GM10248 (cell line): ENCODE measurements at regions of chr19 and their contacts with region 1.

Region 1: GRCh38 chr19:58346961-58347931 is 6.0 kb downstream of the A1BG start:
- DNase-seq: peak; percentile 96
- CTCF ChIP-seq: no peak

Region 2: DNA sequence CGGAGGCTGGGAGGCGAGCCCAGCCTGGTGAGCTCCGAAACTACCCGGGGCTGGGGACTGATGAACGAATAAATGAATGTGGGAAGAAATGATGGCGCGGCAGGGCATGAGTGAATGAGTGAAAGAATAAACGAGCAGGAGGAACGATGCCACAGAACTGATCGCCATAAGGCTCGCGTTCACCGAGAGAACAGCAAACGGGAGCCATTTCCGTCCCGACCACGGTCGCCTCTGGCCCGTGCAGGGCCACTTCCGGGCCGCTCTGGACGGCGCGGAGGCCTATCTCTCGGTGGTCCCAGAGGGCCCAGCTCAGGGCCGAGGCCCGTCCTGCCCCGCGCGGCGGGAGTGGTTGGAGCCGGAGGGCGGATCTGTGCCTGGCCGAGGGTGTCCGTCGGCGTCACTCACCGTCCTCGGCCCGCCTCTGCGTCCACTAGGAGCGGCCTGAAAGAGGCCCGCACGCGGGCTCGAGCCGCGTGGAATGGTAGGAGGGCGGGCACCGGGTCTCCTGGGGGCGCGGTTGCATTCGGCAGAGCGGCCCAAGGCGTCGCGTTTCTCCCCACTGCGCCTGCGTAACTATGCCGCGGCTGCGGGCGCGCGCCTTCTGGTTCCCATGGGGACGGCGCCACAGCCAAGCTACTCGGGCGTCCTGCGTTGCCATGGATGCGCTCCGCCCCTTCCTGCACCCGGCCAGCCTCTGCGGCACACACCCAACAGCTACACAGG is 15.2 kb after region 1 on chr19 and contains the start of gene ZNF497:
- CTCF ChIA-PET with region 1: interaction called, 14 read pairs
- POLR2A ChIA-PET with region 1: interaction called, 9 read pairs
- DNase-seq: peak; percentile 100
- CTCF ChIP-seq: no peak

Region 3: GRCh38 chr19:58386576-58387337 is 39.5 kb after region 1 on chr19 and contains the start of gene RPS5:
- CTCF ChIA-PET with region 1: no interaction called
- POLR2A ChIA-PET with region 1: no interaction called
- DNase-seq: peak; percentile 100
- CTCF ChIP-seq: no peak

Region 4: GRCh38 chr19:58538257-58539168 is 191.3 kb after region 1 on chr19:
- CTCF ChIA-PET with region 1: no interaction called
- POLR2A ChIA-PET with region 1: no interaction called
- DNase-seq: peak; percentile 39
- CTCF ChIP-seq: no peak